CD4-positive, alpha-beta memory T cell (primary cell): ENCODE measurements at regions of chrX and their contacts with region 1.

Region 1: DNA sequence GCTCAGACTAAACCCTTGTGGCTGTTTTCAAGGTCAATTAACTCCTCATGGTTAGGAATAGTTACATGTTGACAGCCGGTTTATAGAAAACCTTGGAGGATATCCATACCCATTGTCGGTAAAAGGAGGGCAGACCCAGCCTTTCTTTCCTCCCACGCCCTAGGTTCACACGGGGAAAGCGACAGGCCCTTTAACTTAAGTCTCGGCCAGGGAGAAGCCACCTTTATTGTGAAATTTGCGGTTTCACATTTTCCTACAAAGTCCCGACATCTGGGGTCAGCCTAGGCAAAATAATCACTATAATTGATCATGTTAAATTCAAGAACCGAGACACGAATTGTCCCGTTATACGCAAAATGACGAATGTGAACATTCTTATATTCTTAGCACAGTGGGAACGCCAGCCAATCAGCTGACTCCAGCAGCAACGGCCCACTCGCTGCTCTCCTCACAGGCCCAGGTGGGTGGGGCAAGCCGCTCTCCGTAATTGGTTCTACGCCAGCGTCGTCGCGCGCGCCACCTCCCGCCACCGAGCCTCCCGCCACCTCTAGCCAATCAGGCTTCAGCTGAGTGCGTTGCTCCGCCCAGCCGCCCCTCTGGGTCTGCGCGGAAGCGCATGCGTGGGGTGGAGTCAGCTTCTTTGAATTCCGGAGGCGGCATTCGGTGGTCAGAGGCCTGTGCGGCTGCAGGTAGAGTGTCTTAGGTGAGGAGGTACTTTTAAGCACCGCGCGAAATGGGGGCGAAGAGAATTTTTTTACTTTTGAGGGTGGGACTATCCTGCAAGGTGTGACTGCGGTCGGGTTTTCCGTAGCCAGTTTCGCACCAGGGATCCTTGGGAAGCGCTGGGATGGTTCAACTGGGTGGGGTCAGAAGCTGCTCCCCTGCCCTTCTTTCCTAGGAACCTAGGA is at the start of gene CENPI:
- DNase-seq: peak; percentile 93 to 94 (median 94)
- H3K4me3 ChIP-seq: peak within 1 kb of the TSS; percentile 68 to 73
- H3K4me3 Mint-ChIP-seq: peak within 1 kb of the TSS; percentile 88 to 94 (median 90)
- H3K27ac ChIP-seq: peak within 1 kb of the TSS; percentile 68
- H3K27ac Mint-ChIP-seq: peak within 1 kb of the TSS; percentile 91 to 96 (median 96)
- H3K4me1 ChIP-seq: peaks cover 6% of the 10 kb centered on the region
- H3K4me1 Mint-ChIP-seq: peaks cover 6 to 16% (median 11%) of the 10 kb centered on the region in 4 donors
- H3K27me3 ChIP-seq: no peaks in the 10 kb centered on the region
- H3K27me3 Mint-ChIP-seq: no peaks in the 10 kb centered on the region
- total RNA-seq, gene CENPI: 0.64 to 0.96 TPM

Region 2: GRCh38 chrX:100819837-100820666 is 277.7 kb before region 1 on chrX and contains the start of gene CSTF2:
- CTCF ChIA-PET with region 1: no interaction called
- POLR2A ChIA-PET with region 1: no interaction called
- intact Hi-C with region 1: loop called (anchors 2 kb)
- DNase-seq: peak; percentile 82 to 90 (median 84)
- H3K4me3 ChIP-seq: peak within 1 kb of the TSS; percentile 74 to 81
- H3K4me3 Mint-ChIP-seq: peak within 1 kb of the TSS; percentile 84 to 92 (median 88)
- H3K27ac ChIP-seq: peak within 1 kb of the TSS; percentile 83
- H3K27ac Mint-ChIP-seq: peak within 1 kb of the TSS; percentile 80 to 99 (median 95)
- H3K4me1 ChIP-seq: peaks cover 4% of the 10 kb centered on the region
- H3K4me1 Mint-ChIP-seq: peaks cover 5 to 15% (median 8%) of the 10 kb centered on the region in 4 donors
- H3K27me3 ChIP-seq: no peaks in the 10 kb centered on the region
- H3K27me3 Mint-ChIP-seq: peaks cover 0 to 2% of the 10 kb centered on the region in 2 donors
- total RNA-seq, gene CSTF2: 14.7 to 15.2 TPM

Region 3: GRCh38 chrX:101357199-101357795 is 259.5 kb after region 1 on chrX:
- CTCF ChIA-PET with region 1: no interaction called
- POLR2A ChIA-PET with region 1: no interaction called
- intact Hi-C with region 1: no loop called
- DNase-seq: no peak
- H3K4me3 ChIP-seq: no peak overlapping the region
- H3K4me3 Mint-ChIP-seq: no peak overlapping the region
- H3K27ac ChIP-seq: no peak overlapping the region
- H3K27ac Mint-ChIP-seq: no peak overlapping the region
- H3K4me1 ChIP-seq: no peaks in the 10 kb centered on the region
- H3K4me1 Mint-ChIP-seq: peaks cover 0 to 2% (median under 1%) of the 10 kb centered on the region in 4 donors
- H3K27me3 ChIP-seq: no peaks in the 10 kb centered on the region
- H3K27me3 Mint-ChIP-seq: no peaks in the 10 kb centered on the region

Region 4: GRCh38 chrX:101668143-101668542 is 570.3 kb after region 1 on chrX:
- CTCF ChIA-PET with region 1: no interaction called
- POLR2A ChIA-PET with region 1: no interaction called
- intact Hi-C with region 1: no loop called
- DNase-seq: no peak
- H3K4me3 ChIP-seq: no peak overlapping the region
- H3K4me3 Mint-ChIP-seq: no peak overlapping the region
- H3K27ac ChIP-seq: no peak overlapping the region
- H3K27ac Mint-ChIP-seq: no peak overlapping the region
- H3K4me1 ChIP-seq: no peaks in the 10 kb centered on the region
- H3K4me1 Mint-ChIP-seq: no peaks in the 10 kb centered on the region
- H3K27me3 ChIP-seq: no peaks in the 10 kb centered on the region
- H3K27me3 Mint-ChIP-seq: peaks cover 0 to 4% of the 10 kb centered on the region in 2 donors